Activated CD8-positive, alpha-beta T cell treated with anti-CD3 and anti-CD28 coated beads for 36 hours (primary cell): ENCODE measurements at regions of chr5 and their contacts with region 1.

Region 1: DNA sequence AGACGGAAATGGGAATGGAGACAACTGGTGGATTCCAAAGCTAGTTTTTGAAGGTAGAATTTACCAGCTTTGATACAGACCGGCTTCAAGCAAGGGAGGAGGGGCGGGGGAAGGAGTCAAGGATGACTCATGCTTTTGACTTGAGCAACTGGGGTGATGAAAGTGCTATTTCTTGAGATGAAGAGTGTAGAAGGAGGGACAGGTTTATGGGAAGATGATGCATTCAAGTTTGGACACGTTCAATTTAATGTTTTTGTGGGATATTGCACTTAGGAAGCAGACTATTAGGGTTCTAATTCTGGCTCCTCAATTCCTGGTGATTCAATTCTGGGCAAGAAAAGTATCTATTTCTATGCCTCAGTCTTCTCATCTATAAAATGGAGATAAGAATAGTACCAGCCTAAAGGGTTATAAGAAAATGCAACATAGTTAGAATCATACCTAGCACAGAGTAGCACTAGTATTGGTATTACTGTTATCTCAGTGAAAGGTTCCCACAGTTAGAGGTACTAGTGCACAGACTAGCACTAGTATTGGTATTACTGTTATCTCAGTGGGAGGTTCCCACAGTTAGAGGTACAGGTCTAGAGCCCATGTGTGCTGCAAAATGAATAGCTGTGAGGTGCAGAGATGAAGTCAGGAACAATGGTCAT is 4.6 kb downstream of the NIPAL4 start:
- DNase-seq: peak; percentile 85
- ATAC-seq: peak; percentile 86
- H3K4me3 Mint-ChIP-seq: no peak overlapping the region
- H3K27ac Mint-ChIP-seq: peak overlapping the region; percentile 47
- H3K4me1 Mint-ChIP-seq: peaks cover 18% of the 10 kb centered on the region
- H3K27me3 Mint-ChIP-seq: peaks cover 20% of the 10 kb centered on the region
- CTCF ChIP-seq: no peak

Region 2: DNA sequence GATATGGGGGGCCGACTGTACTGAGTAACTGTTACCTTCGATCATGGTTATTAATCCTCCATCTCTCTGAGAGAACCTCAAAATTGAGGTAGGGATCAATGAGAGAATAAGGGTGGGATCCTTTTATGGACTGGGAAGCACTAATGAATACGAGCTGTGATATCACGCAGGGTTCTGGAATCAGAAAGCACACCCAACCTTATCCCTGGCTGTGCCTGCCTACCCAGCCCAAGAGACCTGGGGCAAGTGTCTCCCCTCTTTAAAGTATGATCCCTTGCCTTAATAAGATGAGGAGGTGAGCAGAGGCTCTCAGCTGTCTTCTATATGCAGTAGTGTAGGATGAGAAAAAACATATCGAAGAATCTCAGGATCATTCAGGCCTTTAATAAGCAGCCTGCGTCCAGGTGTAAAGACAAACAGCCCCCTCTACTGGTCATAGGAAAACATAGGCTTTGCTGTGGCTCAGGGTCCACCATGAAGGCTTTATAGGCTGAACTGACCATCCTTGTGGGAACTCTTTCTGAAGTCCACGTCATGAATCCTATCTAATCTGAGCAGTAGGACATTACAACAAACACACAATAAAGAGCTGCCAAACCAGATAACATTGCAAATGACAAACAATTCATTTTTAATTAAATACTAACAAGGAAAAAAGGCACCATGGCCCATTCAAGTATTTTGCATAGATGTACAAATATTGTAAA is 12.2 kb after region 1 on chr5:
- CTCF ChIA-PET with region 1: interaction called, 64 read pairs
- POLR2A ChIA-PET with region 1: no interaction called
- intact Hi-C with region 1: no loop called
- DNase-seq: peak; percentile 52
- ATAC-seq: peak; percentile 82
- H3K4me3 Mint-ChIP-seq: no peak overlapping the region
- H3K27ac Mint-ChIP-seq: no peak overlapping the region
- H3K4me1 Mint-ChIP-seq: no peaks in the 10 kb centered on the region
- H3K27me3 Mint-ChIP-seq: no peaks in the 10 kb centered on the region
- CTCF ChIP-seq: peak; percentile 90